Right lobe of liver (tissue), 6 donors: ENCODE measurements at regions of chr12 and their contacts with region 1.

Region 1: DNA sequence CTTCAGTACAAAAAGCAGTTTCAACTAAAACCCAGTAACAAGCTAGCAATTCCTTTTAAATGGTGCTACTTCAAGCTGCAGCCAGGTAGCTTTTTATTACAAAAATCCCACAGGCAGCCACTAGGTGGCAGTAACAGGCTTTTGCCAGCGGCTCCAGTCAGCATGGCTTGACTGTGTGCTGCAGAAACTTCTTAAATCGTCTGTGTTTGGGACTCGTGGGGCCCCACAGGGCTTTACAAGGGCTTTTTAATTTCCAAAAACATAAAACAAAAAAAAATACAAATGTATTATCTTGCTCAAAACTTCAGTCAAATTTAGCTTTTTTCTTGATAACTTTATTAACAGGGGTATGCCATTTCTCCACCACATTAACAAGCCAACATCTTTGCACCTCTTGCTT is 3.6 kb upstream of the CLEC4E start:
- DNase-seq: peak in 2 of 3 donors; percentile 51 to 69
- ATAC-seq: peak; percentile 87 to 97 (median 91)
- H3K4me3 ChIP-seq: no peak overlapping the region
- H3K27ac ChIP-seq: no peak overlapping the region
- H3K4me1 ChIP-seq: no peaks in the 10 kb centered on the region
- H3K27me3 ChIP-seq: no peaks in the 10 kb centered on the region
- CTCF ChIP-seq: peak; percentile 89 to 95 (median 93)
- POLR2A ChIP-seq: no peak

Region 2: GRCh38 chr12:8483079-8483478 is 61.2 kb before region 1 on chr12:
- intact Hi-C with region 1: no loop called
- DNase-seq: no peak
- ATAC-seq: no peak
- H3K4me3 ChIP-seq: no peak overlapping the region
- H3K27ac ChIP-seq: no peak overlapping the region
- H3K4me1 ChIP-seq: no peaks in the 10 kb centered on the region
- H3K27me3 ChIP-seq: no peaks in the 10 kb centered on the region
- CTCF ChIP-seq: no peak
- POLR2A ChIP-seq: no peak

Region 3: DNA sequence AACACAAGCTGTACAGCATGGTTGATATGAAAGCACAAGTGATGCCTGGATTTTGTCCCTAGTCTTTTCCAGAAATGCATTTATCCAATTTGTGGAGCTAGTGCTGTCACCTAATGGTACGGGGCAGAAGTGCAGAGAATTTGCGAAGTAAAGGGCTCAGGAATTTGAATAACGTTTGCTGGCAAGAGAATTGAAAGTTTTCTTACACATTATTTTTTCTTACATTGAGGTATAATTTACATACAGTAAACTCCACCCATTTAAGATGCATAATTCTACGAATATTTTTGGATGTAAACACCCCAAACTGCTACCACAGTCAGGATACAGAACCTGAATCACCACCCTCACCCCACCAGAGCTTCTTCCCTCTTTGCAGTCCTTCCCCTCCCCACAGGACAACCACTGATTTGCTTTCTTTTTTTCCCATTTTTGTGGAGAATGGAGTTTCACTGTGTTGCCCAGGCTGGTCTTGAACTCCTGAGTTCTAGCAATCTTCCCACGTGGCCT is 64.8 kb after region 1 on chr12:
- intact Hi-C with region 1: loop called (anchors 5 to 10 kb)
- DNase-seq: no peak
- ATAC-seq: peak; percentile 79 to 90 (median 84)
- H3K4me3 ChIP-seq: no peak overlapping the region
- H3K27ac ChIP-seq: no peak overlapping the region
- H3K4me1 ChIP-seq: no peaks in the 10 kb centered on the region
- H3K27me3 ChIP-seq: no peaks in the 10 kb centered on the region
- CTCF ChIP-seq: peak; percentile 66 to 81 (median 76)
- POLR2A ChIP-seq: no peak

Region 4: GRCh38 chr12:8887285-8887715 is 343.0 kb after region 1 on chr12:
- intact Hi-C with region 1: no loop called
- DNase-seq: no peak
- ATAC-seq: no peak
- H3K4me3 ChIP-seq: no peak overlapping the region
- H3K27ac ChIP-seq: no peak overlapping the region
- H3K4me1 ChIP-seq: no peaks in the 10 kb centered on the region
- H3K27me3 ChIP-seq: no peaks in the 10 kb centered on the region
- CTCF ChIP-seq: no peak
- POLR2A ChIP-seq: no peak